ENCODE measurements at regions of chr10 and their contacts with region 1.

Region 1: GRCh38 chr10:98790802-98791201 is 344.1 kb upstream of the HPS1 start:
- DNase-seq: peak; percentile 61
- H3K4me3 ChIP-seq: no peak overlapping the region
- H3K27ac ChIP-seq: no peak overlapping the region
- H3K4me1 ChIP-seq: no peaks in the 10 kb centered on the region
- H3K27me3 ChIP-seq: no peaks in the 10 kb centered on the region
- CTCF ChIP-seq: peak; percentile 18; the same call in 1 of the 2 replicates
- EP300 ChIP-seq: no peak
- RAD21 ChIP-seq: peak; percentile 78

Region 2: GRCh38 chr10:98694014-98694413 is 96.8 kb before region 1 on chr10:
- CTCF ChIA-PET with region 1: no interaction called
- POLR2A ChIA-PET with region 1: no interaction called
- DNase-seq: no peak
- H3K4me3 ChIP-seq: no peak overlapping the region
- H3K27ac ChIP-seq: no peak overlapping the region
- H3K4me1 ChIP-seq: no peaks in the 10 kb centered on the region
- H3K27me3 ChIP-seq: no peaks in the 10 kb centered on the region
- CTCF ChIP-seq: no peak
- EP300 ChIP-seq: no peak
- RAD21 ChIP-seq: no peak

Region 3: GRCh38 chr10:99172130-99172738 is 381.4 kb after region 1 on chr10:
- CTCF ChIA-PET with region 1: interaction called, 12 read pairs
- POLR2A ChIA-PET with region 1: no interaction called
- DNase-seq: peak; percentile 72
- H3K4me3 ChIP-seq: peak overlapping the region in 1 of 2 experiments; percentile 43; a peak in 1 of 4 replicates
- H3K27ac ChIP-seq: no peak overlapping the region
- H3K4me1 ChIP-seq: no peaks in the 10 kb centered on the region
- H3K27me3 ChIP-seq: no peaks in the 10 kb centered on the region
- CTCF ChIP-seq: peak; percentile 38
- EP300 ChIP-seq: no peak
- RAD21 ChIP-seq: peak; percentile 91